Posterior vena cava (tissue), 2 donors: ENCODE measurements at regions of chr1 and their contacts with region 1.

Region 1: DNA sequence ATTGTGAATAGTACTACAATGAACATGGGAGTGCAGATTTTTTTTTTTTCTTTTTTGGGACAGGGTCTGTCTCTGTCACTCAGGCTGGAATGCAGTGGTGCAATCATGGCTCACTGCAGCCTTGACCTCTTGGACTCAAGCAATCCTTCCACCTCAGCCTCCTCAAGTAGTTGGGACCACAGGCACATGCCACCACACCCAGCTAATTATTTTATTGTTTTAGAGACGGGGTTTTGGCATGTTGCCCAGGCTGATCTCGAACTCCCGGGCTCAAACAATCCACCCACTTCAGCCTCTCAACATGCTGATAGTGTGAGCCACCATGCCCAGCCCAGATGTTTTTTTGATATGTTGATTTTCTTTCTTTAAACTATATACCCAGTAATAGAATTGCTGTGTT is 57.7 kb downstream of the RGSL1 start:
- DNase-seq: no peak

Region 2: GRCh38 chr1:182170891-182171461 is 336.7 kb before region 1 on chr1:
- intact Hi-C with region 1: no loop called
- DNase-seq: no peak

Region 3: DNA sequence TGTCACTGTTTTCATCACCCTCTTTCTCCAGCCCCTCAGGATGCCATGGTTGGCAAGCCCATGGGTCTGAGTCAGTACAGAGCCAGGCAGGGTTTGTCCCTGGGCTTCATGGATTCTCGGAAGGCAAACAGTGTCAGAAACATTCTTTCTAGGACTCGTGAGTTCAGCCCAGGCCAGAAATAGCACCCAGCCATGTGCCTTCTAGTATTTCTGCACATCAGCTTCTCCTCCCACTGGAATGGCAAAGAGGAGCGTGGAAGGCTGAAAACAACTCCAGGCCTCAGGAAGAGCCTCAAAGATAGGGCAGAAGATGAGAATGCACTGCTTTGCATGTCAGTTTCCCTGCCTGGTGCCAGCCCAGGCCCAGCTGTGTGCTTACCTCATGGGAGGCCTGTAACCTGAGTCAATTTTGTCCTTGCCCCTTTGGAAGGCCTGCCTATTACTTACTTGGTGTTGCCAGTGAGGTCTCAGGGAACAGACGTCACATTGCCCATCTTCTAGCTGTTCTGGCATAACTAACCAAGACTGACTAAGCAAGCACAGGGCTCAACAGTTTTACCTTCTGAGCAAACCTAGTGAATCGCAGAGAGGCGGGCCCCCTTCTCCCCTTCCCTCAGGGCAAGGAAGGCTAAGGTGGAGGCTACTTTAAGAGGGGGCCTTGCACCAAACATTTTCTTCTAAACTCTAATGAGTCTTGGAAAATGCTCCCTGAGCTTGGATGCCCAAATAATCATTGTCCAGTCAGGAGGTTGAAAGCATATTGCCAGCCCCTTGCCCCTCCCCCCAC is 158.5 kb before region 1 on chr1:
- intact Hi-C with region 1: no loop called
- DNase-seq: peak; percentile 83

Region 4: DNA sequence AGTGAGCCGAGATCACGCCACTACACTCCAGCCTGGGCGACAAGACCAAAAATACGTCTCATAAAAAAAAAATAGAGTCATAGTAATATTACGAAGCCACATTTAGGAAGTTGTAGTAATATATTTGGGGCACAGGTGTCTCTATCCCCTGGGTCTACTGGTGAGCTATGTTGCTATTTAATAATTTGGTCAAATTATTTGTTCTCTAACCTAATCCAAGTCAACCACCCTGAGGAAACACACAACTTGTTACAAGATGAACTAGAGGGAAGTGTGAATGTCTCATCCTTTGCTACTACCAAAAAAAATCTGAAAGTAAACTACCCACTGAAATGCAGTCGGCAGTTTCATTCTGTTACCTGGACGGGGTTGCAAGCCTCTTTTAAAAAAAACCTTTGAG is 141.4 kb after region 1 on chr1:
- intact Hi-C with region 1: loop called in 1 of 2 experiments (anchors 5 kb)
- DNase-seq: no peak

Region 5: GRCh38 chr1:182781841-182782586 is 274.3 kb after region 1 on chr1:
- intact Hi-C with region 1: no loop called
- DNase-seq: peak; percentile 88